Dorsolateral prefrontal cortex (tissue), 120 donors: ENCODE measurements at regions of chr6 and their contacts with region 1.

Region 1: DNA sequence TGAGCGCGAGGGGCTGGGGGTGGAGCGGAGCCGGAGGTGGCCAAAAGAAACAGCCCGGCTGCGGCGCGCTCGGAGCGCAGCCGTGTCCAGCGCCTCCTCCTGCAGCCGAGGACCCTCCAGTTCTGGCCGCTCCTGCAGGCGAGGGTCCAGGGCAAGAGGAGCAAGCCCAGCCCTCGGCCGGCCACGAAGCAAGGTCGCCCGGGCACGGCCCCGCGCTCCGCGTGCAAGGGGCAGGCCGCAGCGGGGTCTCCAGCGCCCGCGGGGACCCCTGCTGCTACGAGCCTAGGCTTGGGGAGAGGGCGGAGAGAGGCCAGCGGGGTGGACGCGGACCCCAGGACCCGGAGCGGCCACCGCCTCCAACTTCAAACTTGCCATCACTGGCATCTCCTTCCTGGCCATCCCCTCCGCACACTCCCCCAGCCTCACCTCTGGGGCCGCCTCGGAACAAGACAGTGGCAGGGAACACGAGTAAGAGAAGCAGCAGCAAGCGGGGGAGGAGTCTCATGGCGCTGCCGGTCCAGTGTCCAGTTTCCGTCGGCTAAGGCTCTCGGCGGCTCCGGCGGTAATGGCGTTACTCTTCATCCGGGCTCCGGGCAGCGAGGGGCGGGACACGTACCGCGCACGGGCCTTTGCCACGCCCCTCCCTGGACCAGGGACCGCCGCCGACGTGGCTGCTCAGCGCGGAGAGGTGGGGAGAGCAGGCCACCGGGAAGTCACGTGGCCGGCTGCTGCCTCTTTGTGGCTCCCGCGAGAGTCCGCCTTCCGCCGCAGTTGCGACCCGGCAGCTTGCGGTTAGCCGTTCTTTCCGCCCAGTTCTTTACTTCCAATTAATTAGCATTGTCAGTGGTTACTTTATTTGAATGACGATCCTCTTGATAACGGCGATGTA is at the start of gene SSR1:
- DNase-seq: peak; percentile 95 to 99 (median 98)
- H3K4me3 ChIP-seq: peak within 1 kb of the TSS; percentile 67 to 100 (median 97)
- H3K27ac ChIP-seq: peak within 1 kb of the TSS; percentile 65 to 98 (median 93)
- H3K27me3 ChIP-seq: no peaks in the 10 kb centered on the region
- CTCF ChIP-seq: peak in 38 of 56 donors; percentile 10 to 62 (median 33)
- total RNA-seq, gene SSR1: 65.6 to 106 (median 82.5) TPM

Region 2: GRCh38 chr6:7112741-7113313 is 200.0 kb before region 1 on chr6:
- intact Hi-C with region 1: no loop called
- DNase-seq: no peak
- H3K4me3 ChIP-seq: no peak overlapping the region
- H3K27ac ChIP-seq: no peak overlapping the region
- H3K27me3 ChIP-seq: peaks cover 0 to 53% (median 13%) of the 10 kb centered on the region in 45 donors
- CTCF ChIP-seq: no peak

Region 3: GRCh38 chr6:7267466-7268091 is 45.3 kb before region 1 on chr6:
- intact Hi-C with region 1: loop called in 1 of 2 experiments (anchors 5 kb)
- DNase-seq: peak in 9 of 10 donors; percentile 30 to 95 (median 84)
- H3K4me3 ChIP-seq: no peak overlapping the region
- H3K27ac ChIP-seq: peak overlapping the region in 7 of 59 donors; percentile 2 to 55 (median 21)
- H3K27me3 ChIP-seq: no peaks in the 10 kb centered on the region
- CTCF ChIP-seq: no peak

Region 4: GRCh38 chr6:7389451-7390225 is 76.8 kb after region 1 on chr6 and contains the starts of genes CAGE1 and RIOK1:
- intact Hi-C with region 1: loop called (anchors 1 kb)
- DNase-seq: peak; percentile 88 to 97 (median 94)
- H3K4me3 ChIP-seq: peak within 1 kb of the TSS; percentile 43 to 99 (median 87)
- H3K27ac ChIP-seq: peak within 1 kb of the TSS; percentile 44 to 96 (median 84)
- H3K27me3 ChIP-seq: no peaks in the 10 kb centered on the region
- CTCF ChIP-seq: peak in 44 of 56 donors; percentile 5 to 52 (median 30)
- total RNA-seq, gene CAGE1: 0.14 to 0.63 (median 0.23) TPM in 21 of 120 experiments, not detected in the others
- total RNA-seq, gene RIOK1: 5.9 to 18.7 (median 11.8) TPM

Region 5: GRCh38 chr6:7589949-7590917 is 277.4 kb after region 1 on chr6 and contains the start of gene SNRNP48:
- intact Hi-C with region 1: loop called (anchors 2 kb)
- DNase-seq: peak; percentile 89 to 95 (median 94)
- H3K4me3 ChIP-seq: peak within 1 kb of the TSS; percentile 48 to 99 (median 94)
- H3K27ac ChIP-seq: peak within 1 kb of the TSS in 51 of 59 donors; percentile 15 to 87 (median 60)
- H3K27me3 ChIP-seq: no peaks in the 10 kb centered on the region
- CTCF ChIP-seq: peak in 28 of 56 donors; percentile 5 to 54 (median 22)
- total RNA-seq, gene SNRNP48: 7.9 to 25.1 (median 12.6) TPM